Natural killer cell (primary cell): ENCODE measurements at regions of chr2 and their contacts with region 1.

Region 1: DNA sequence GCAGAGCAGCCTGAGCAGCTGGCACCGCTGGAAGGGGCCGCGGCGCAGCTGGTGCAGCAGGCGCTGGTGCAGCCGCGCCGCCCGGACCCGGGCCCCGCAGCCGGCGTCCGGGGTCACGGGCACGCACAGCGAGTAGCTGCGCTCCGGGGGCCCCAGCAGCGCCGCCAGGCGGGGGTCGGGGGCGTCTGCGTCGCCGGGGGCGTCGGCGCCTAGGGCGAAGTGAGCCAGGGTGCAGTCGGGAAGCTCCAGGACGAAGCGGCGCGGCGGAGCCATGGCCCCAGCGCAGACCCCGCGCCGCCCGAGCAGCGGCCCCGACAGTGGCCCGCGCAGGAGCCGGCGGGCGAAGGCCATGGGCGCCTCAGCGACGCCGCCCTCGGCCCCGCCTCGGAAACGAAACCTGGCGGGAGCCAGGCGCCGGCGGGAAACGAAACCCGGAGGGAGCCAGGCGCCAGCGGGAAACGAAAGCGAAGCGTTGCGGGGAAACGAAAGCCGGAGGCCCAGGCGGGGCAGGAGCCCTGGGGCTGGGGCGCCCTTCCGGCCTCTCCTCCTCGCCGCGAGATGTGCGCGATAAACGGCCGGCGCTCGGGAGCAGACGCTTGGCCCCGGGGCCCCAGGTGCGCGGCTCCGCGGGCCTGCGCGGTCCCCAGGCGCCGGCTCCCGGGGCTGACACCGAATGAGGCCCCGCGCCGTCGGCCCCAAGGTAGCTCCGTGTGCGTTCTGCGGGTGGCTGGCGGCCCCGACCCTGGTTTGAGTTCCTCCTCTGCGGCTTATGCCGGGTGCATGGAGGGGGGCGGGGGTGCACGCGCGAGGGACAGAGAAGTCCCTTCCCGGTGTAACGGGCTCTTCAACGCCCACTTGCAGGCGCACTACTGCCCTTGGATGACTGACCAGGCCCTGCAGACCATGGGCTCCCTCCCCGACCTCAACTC is at the start of gene CMPK2:
- DNase-seq: peak; percentile 64 to 89
- ATAC-seq: peak; percentile 78 to 82 (median 80)
- H3K4me3 ChIP-seq: peak within 1 kb of the TSS; percentile 62
- H3K4me3 Mint-ChIP-seq: peak within 1 kb of the TSS; percentile 94
- H3K27ac ChIP-seq: peak within 1 kb of the TSS; percentile 24
- H3K27ac Mint-ChIP-seq: peak within 1 kb of the TSS; percentile 58 to 88
- H3K4me1 ChIP-seq: peaks cover 17% of the 10 kb centered on the region
- H3K4me1 Mint-ChIP-seq: peaks cover 22 to 32% of the 10 kb centered on the region in 2 donors
- H3K27me3 ChIP-seq: no peaks in the 10 kb centered on the region
- H3K27me3 Mint-ChIP-seq: no peaks in the 10 kb centered on the region
- CTCF ChIP-seq: no peak
- total RNA-seq, gene CMPK2: 5.8 to 11.4 (median 8.6) TPM

Region 2: GRCh38 chr2:6877402-6878304 is 12.0 kb after region 1 on chr2 and contains the start of gene RSAD2:
- intact Hi-C with region 1: loop called (anchors 1 kb)
- DNase-seq: peak in 1 of 2 donors; percentile 80
- ATAC-seq: peak; percentile 89 to 94 (median 91)
- H3K4me3 ChIP-seq: peak within 1 kb of the TSS; percentile 29
- H3K4me3 Mint-ChIP-seq: peak within 1 kb of the TSS; percentile 86
- H3K27ac ChIP-seq: peak within 1 kb of the TSS; percentile 36
- H3K27ac Mint-ChIP-seq: peak within 1 kb of the TSS; percentile 70 to 89
- H3K4me1 ChIP-seq: peaks cover 17% of the 10 kb centered on the region
- H3K4me1 Mint-ChIP-seq: peaks cover 38 to 39% of the 10 kb centered on the region in 2 donors
- H3K27me3 ChIP-seq: no peaks in the 10 kb centered on the region
- H3K27me3 Mint-ChIP-seq: no peaks in the 10 kb centered on the region
- CTCF ChIP-seq: no peak
- total RNA-seq, gene RSAD2: 7.9 to 12.0 (median 9.4) TPM